Activated CD8-positive, alpha-beta memory T cell treated with anti-CD3 and anti-CD28 coated beads, Interleukin-2, amount 10 ng/mL, durations not matched to agents 7 days and 5 days (primary cell): ENCODE measurements at regions of chr6 and their contacts with region 1.

Region 1: GRCh38 chr6:104843200-104843599 is 16.5 kb downstream of the HACE1 start:
- DNase-seq: no peak
- ATAC-seq: no peak
- H3K4me3 Mint-ChIP-seq: no peak overlapping the region
- H3K27ac Mint-ChIP-seq: no peak overlapping the region
- H3K4me1 Mint-ChIP-seq: no peaks in the 10 kb centered on the region
- H3K27me3 Mint-ChIP-seq: no peaks in the 10 kb centered on the region

Region 2: GRCh38 chr6:104859225-104860146 is 16.3 kb after region 1 on chr6 and contains the start of gene HACE1:
- CTCF ChIA-PET with region 1: interaction called, 21 read pairs
- DNase-seq: peak; percentile 93
- ATAC-seq: peak; percentile 99
- H3K4me3 Mint-ChIP-seq: peak within 1 kb of the TSS; percentile 90
- H3K27ac Mint-ChIP-seq: peak within 1 kb of the TSS; percentile 82
- H3K4me1 Mint-ChIP-seq: peaks cover 20% of the 10 kb centered on the region
- H3K27me3 Mint-ChIP-seq: no peaks in the 10 kb centered on the region
- total RNA-seq, gene HACE1: 15.6 to 22.0 TPM